A549 (cell line): ENCODE measurements at regions of chr15 and their contacts with region 1.

Region 1: GRCh38 chr15:80384432-80384831 is 19.8 kb upstream of the ARNT2 start:
- DNase-seq: no peak
- ATAC-seq: no peak
- H3K4me3 ChIP-seq: no peak overlapping the region
- H3K27ac ChIP-seq: no peak overlapping the region
- H3K4me1 ChIP-seq: no peaks in the 10 kb centered on the region
- CTCF ChIP-seq: no peak
- EP300 ChIP-seq: no peak
- POLR2A ChIP-seq: no peak
- RAD21 ChIP-seq: no peak

Region 2: DNA sequence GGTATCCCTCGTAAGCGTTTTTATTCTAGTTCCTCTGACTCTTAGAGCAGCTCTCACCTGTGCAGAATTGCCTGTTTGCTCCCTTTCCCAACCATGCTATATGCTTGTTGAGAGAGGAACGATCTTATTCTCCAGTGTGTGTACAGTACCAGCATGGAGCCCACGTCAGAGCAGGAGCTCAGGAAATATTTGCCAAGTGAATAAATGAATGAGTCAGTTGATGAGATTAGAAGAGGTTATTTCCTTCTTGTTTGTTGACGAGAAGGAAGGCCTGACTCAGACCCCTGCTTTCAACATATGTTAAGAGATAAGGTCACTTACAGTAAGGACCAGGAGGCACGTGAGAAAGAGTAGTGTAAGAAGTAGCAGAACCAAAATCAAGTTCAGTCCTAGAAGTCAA is 204.4 kb after region 1 on chr15:
- CTCF ChIA-PET with region 1: no interaction called
- POLR2A ChIA-PET with region 1: interaction called, 13 read pairs
- DNase-seq: peak; percentile 80 to 90
- ATAC-seq: peak; percentile 85 to 90
- H3K4me3 ChIP-seq: 0 out of 3 replicates have a peak overlapping the region, but pooled peaks have one; percentile 4
- H3K27ac ChIP-seq: peak overlapping the region; percentile 72 to 79
- H3K4me1 ChIP-seq: peaks cover 47% of the 10 kb centered on the region
- CTCF ChIP-seq: no peak
- EP300 ChIP-seq: peak; percentile 77 to 86; a peak in 3 of 5 replicates
- POLR2A ChIP-seq: no peak
- RAD21 ChIP-seq: no peak; a peak in 1 of 5 replicates